ENCODE measurements at regions of chr1 and their contacts with region 1.

Region 1: GRCh38 chr1:226062558-226063223 is at the start of gene H3-3A:
- DNase-seq: peak; percentile 97
- CTCF ChIP-seq: no peak

Region 2: DNA sequence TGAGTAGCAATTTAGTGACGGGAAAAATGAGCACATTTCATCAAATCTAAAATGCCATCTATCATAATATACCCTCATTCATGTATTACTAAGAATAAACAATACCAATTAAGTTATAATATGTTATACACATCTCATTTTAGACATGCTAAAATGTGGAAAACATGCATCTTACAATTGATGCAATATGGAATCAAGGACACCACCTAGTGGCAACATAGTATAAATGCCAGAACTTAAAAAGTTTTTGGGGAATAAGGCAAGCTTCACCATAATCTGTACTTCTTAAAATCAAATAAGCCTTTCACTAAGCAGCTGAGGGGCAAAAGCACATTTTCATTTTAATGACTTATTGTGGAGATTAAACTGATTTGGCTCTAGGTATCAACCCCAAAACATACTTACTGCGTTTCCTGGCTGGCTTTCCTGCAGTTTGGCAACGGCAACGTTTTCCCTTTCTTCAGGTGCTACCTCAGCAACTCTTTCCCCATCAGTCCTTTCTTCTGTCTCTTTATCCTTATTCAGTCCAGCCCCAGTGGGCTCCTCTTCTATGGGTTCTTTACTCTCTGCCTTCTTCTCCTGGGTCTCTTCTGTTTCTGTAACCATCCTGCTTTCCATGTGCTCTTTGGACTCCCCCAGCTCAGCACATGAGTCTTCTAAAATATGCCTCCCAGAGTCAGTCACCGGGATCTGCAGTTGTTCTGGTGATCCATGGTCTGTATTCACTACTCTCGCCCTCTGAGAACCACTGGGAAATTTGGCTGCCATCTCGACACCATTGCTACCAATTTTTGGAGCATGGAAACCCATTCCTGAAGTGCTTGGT is 75.0 kb before region 1 on chr1:
- CTCF ChIA-PET with region 1: interaction called, 16 read pairs
- POLR2A ChIA-PET with region 1: interaction called, 4 read pairs
- DNase-seq: no peak
- CTCF ChIP-seq: peak; percentile 60

Region 3: DNA sequence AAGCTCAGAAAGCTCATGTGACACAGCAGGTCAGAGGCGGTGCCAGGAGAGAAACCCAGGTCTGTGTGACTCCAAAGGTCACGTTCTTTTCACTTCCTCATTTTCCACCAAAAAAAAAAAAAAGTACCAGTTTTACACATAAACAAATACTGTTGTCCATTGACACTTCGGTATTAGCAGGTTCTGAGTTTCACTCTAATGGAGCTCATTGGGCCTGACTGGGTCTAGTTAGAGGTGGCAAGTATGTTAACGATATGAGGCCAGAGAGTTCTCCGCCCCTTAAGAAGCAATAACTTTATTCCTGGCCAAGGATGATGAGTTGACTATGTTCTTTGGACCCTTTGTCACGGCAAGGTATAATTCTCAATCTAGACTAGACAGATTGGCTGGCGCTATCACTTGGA is 33.6 kb before region 1 on chr1:
- CTCF ChIA-PET with region 1: interaction called, 22 read pairs
- POLR2A ChIA-PET with region 1: interaction called, 18 read pairs
- DNase-seq: peak; percentile 64
- CTCF ChIP-seq: no peak

Region 4: GRCh38 chr1:226074046-226074445 is 11.4 kb after region 1 on chr1:
- CTCF ChIA-PET with region 1: interaction called, 73 read pairs
- POLR2A ChIA-PET with region 1: interaction called, 9 read pairs
- DNase-seq: no peak
- CTCF ChIP-seq: no peak

Region 5: DNA sequence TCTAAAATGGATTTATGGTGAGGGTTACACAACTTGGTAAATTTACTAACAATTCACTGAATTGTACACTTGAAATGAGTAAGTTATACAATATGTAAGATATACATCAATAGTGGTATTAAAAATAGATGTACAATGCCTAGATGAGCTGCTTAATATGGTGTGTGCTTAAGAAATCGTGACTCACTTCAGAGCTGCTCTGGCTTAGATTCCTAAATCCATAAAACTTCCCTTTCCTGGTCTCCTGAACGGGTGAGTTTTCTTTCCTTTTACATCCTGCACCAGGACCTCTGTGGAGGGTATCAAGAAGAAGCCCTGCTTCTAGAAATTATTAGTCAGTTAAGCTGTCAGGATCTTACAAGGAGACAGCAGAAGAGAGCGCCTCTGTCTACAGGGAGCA is 30.3 kb after region 1 on chr1:
- CTCF ChIA-PET with region 1: interaction called, 12 read pairs
- POLR2A ChIA-PET with region 1: no interaction called
- DNase-seq: no peak
- CTCF ChIP-seq: no peak

Region 6: GRCh38 chr1:226109829-226110248 is 47.1 kb after region 1 on chr1:
- CTCF ChIA-PET with region 1: interaction called, 48 read pairs
- POLR2A ChIA-PET with region 1: interaction called, 4 read pairs
- DNase-seq: peak; percentile 96
- CTCF ChIP-seq: no peak